ENCODE measurements at regions of chr17 and their contacts with region 1.

Region 1: GRCh38 chr17:61389670-61390478 is 9.8 kb upstream of the TBX2 start:
- DNase-seq: peak; percentile 81
- CTCF ChIP-seq: peak; percentile 94

Region 2: GRCh38 chr17:60720763-60721531 is 668.9 kb before region 1 on chr17:
- in situ Hi-C with region 1: loop called (anchors 10 kb)
- DNase-seq: peak; percentile 65
- CTCF ChIP-seq: peak; percentile 83

Region 3: DNA sequence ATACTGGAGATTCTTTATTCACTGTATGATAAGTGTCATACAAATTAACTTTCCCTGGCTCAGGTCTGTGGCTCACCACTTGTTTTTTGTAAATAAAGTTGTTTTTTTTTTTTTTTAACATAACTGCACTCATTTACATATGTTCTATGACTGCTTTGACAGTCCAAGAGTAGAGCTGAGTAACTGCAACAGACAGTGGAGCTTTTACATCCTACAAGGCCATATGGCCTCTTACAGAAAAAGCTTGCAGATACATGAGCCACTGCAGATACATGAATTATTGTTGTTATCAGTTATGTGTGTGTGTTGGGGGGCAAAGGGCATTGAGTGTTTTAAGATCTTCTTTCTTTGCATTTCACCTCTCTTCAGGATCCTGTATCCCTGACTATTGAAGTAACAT is 400.5 kb before region 1 on chr17:
- in situ Hi-C with region 1: loop called (anchors 10 kb)
- DNase-seq: no peak
- CTCF ChIP-seq: no peak

Region 4: DNA sequence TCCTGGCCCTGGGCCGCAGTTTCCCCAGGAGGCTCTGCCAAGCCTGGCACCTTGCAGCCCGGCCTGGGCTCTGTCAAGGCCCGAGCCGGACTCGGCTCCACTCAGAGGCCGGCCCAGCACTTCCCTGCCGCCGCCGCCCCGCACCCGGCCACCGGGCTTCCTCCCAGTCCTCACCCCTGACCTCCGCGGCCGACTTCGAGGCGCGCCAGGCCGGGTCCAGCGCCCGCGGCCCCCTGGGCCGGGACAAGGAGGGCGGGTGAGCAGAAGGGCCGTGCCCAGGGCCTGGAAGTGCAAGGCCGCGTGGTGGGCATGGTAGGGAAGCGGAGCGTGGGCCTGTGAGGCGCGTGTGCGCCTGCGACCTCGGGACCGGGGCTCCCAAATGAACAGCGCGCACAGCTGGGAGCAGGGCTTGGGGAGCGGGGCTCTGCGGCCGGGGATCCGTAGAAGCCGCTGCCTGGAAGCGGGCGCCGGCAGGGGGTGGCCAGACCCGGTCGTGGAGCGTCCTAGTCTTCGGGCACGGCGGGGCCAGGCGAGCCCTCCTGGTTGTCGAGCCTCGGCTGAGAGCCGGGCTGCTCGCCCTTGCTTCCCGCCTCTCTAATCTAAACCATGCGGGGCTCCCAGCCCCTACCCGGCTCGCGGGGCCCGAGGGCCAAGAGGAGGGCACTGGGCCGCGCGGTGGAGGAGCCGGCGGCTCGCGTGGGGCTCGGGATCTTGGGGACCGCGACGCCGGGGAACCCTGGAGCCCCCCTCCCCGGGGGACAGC is 61.8 kb after region 1 on chr17:
- in situ Hi-C with region 1: loop called (anchors 10 kb)
- DNase-seq: peak; percentile 39
- CTCF ChIP-seq: no peak